Adrenal gland (tissue), 19 donors: ENCODE measurements at regions of chr2 and their contacts with region 1.

Region 1: DNA sequence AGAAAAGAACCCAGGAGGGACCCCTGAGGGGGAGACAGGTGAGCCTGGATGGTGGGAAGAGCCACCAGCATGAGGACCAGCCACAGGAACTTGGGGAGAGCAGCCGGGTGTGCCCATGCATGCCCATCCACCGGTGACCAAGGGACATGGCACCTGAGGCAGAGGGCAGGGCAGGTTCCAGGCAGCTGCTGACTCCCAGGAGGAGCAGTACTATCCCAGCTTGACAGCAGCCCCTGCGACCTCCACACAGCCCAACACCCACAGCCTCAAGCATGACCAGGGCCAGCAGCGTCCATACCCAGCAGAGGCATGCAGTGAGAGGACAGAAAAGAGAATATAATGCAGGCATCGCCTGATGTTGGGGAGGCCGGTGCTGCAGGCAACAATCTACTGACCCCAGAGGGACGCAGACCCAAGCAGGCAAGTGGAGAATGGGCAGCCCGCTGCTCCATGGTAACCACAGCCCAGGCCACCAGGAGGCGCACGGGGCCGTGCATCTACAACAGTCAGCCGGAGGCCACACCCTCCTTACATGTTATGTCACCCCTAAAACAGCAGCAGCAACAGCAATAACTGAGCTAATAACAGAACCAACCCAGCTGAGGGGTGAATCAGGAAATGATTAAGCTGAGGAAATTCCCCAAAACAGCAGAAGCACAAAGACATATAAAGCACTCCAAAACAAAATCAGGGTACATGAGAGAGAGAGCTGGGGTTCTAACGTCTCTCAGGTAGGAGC is 44.1 kb downstream of the ANKMY1 start:
- DNase-seq: peak; percentile 78 to 93 (median 85)
- H3K4me3 ChIP-seq: no peak overlapping the region
- H3K27ac ChIP-seq: no peak overlapping the region
- H3K4me1 ChIP-seq: no peaks in the 10 kb centered on the region
- H3K27me3 ChIP-seq: no peaks in the 10 kb centered on the region
- CTCF ChIP-seq: peak; percentile 70 to 92 (median 88)
- POLR2A ChIP-seq: no peak

Region 2: DNA sequence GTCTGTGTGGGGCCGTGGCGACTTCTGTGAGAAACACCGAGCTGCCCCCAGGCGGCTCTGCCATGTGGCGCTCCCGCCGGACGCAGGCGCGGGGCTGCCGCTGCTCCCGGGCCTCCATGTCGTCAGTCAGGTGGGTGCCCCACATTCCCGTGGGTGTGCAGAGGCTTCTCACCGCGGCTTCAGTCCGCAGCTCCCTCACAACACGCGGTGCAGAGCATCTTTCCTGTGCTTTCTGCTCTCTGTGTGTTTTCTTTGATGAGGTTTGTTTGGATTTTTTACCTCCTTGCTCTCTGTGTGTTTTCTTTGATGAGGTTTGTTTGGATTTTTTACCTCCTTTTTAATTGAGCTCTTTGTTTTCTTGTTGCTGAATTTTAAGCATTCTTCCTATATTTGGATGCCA is 190.9 kb after region 1 on chr2:
- intact Hi-C with region 1: loop called (anchors 5 to 10 kb)
- DNase-seq: no peak
- H3K4me3 ChIP-seq: no peak overlapping the region
- H3K27ac ChIP-seq: no peak overlapping the region
- H3K4me1 ChIP-seq: no peaks in the 10 kb centered on the region
- H3K27me3 ChIP-seq: peaks cover 21% of the 10 kb centered on the region
- CTCF ChIP-seq: no peak
- POLR2A ChIP-seq: no peak

Region 3: GRCh38 chr2:240832205-240832727 is 318.5 kb after region 1 on chr2:
- intact Hi-C with region 1: loop called in 1 of 2 experiments (anchors 10 kb)
- DNase-seq: peak; percentile 90 to 97 (median 94)
- H3K4me3 ChIP-seq: peak overlapping the region in 1 of 4 donors; percentile 41
- H3K27ac ChIP-seq: peak overlapping the region in 1 of 5 donors; percentile 15
- H3K4me1 ChIP-seq: peaks cover 0 to 9% of the 10 kb centered on the region in 2 donors
- H3K27me3 ChIP-seq: peaks cover 20% of the 10 kb centered on the region
- CTCF ChIP-seq: no peak
- POLR2A ChIP-seq: no peak

Region 4: DNA sequence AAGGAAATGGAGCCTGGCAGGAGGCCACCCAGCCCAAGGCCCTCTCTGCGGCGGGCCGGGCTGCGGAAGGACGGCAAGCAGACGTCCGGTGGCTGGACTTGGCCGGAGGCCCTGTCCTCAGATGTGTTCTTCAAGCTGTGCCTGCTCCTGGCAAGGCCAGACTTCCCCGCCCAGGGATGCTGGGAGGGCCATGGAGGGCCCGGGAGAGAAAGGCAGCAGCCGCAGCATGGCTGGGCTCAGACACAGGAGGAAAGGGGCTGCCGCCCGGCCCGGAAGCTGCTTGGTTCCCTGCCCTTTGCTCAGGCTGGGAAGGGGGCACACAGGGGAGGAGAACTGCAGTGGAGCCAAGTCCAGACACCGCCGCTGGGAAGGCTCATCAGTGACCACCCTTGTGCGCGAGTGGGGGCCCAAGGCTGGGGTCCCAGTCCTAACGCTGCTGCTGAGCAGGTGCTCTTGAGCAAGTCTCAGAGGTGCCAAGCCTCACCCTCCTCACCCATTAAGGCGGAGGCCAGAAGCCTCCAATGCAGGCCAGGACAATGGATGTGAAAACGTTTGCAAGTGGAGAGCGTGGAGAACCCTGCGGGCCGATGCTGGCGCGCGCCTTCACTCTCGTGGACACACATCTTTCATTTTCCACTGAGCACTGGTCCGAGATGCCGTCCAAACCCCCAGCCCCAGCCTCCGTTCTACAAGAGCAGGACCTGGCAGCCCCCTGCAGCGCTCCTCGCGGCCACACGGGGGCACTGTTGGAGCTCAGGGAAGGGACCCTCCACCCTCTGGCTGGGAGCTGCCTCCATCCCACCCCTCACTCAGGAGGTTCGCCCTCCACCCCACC is 400.3 kb after region 1 on chr2:
- intact Hi-C with region 1: no loop called
- DNase-seq: peak; percentile 84 to 93 (median 90)
- H3K4me3 ChIP-seq: no peak overlapping the region
- H3K27ac ChIP-seq: peak overlapping the region in 2 of 5 donors; percentile 41 to 66
- H3K4me1 ChIP-seq: peaks cover 9 to 14% of the 10 kb centered on the region in 2 donors
- H3K27me3 ChIP-seq: no peaks in the 10 kb centered on the region
- CTCF ChIP-seq: peak; percentile 61 to 86 (median 75)
- POLR2A ChIP-seq: no peak